IMR-90 (cell line): ENCODE measurements at regions of chr17 and their contacts with region 1.

Region 1: DNA sequence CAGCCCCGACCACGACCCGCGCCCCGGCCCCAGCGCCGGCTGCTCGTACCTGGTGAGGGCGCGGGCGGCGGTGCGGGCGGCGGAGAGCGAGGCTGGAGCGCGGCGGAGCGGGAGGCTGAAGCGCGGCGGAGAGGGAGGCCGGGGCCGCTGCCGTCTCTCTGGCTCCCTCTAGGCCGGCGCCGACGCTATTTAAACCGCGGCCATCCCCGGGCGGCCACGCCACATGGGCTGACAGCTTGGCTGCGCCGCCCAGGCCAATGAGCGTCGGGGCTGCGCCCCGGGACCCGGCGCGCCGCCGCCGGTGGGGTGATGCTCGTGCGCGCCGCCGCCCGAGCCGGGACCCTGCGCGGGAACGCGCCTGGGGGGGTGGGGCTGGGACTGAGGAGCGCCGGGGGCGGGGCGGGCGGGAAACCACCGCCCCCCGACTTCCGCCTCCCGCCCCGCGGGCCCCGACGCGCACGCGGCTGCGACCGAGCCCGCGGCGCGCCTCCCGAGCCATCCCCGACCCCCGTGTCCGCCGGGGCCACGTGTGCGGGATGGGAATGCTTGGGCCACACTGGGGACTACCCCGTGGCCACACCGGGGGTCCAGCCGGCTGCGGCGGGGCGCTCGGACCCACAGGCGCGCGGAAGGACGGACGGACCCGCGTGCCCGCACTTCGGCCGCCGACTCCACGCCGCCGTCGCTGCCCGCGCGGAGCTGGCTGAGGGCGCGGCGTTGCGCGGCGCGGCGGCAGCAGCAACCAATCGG is at the start of gene FASN:
- DNase-seq: peak; percentile 93
- ATAC-seq: peak; percentile 85
- H3K4me3 ChIP-seq: peak within 1 kb of the TSS; percentile 72
- H3K27ac ChIP-seq: peak within 1 kb of the TSS; percentile 94
- H3K4me1 ChIP-seq: peaks cover 13% of the 10 kb centered on the region
- H3K27me3 ChIP-seq: no peaks in the 10 kb centered on the region
- CTCF ChIP-seq: peak; percentile 66
- POLR2A ChIP-seq: peak; percentile 97
- RAD21 ChIP-seq: peak; percentile 15; the same call in 1 of the 2 replicates
- total RNA-seq, gene FASN: 12.4 and 15.3 TPM in 2 replicates

Region 2: DNA sequence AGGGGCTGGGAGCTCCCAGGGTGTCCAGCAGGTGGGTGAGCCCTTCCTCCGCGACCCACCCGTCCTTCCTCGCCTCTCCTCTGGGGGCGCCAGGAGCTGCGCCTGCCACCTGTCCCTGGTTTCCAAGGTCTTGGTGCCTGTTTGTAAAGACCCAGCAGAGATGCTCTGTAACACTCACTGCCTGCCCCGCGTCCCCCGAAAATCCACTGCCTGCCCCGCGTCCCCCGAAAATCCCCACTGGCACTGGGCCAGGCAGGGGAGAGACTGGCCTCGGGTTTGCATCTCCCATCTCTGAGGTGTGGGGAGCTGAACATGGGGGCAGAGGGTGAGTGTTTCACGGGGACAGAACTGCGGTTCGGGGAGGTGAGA is 657.4 kb before region 1 on chr17:
- CTCF ChIA-PET with region 1: no interaction called
- POLR2A ChIA-PET with region 1: no interaction called
- dilution Hi-C with region 1: no loop called
- in situ Hi-C with region 1: no loop called
- intact Hi-C with region 1: no loop called
- DNase-seq: no peak
- ATAC-seq: no peak
- H3K4me3 ChIP-seq: no peak overlapping the region
- H3K27ac ChIP-seq: no peak overlapping the region
- H3K4me1 ChIP-seq: peaks cover 4% of the 10 kb centered on the region
- H3K27me3 ChIP-seq: no peaks in the 10 kb centered on the region
- CTCF ChIP-seq: peak; percentile 44
- POLR2A ChIP-seq: no peak
- RAD21 ChIP-seq: peak; percentile 47

Region 3: DNA sequence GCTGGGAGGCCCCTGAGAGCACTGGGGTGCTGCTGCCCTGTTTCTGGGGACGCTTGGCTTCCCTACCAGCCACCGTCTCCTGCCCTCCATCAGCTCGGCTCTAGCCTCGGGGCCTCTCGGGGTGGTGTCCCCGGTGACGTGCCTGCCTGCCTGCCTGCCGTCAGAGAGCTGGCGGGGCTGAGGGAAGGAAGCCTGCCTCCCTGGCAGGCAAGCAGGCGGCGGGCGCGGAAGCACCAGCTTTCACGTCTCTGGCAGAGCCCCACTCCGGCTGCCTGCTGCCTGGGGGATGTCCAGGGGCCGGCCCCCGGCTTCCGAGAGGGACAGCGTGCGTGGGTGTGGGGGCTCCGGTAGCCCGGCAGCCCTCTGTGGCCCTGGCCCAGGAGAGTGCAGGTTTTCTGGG is 84.9 kb before region 1 on chr17:
- CTCF ChIA-PET with region 1: no interaction called
- POLR2A ChIA-PET with region 1: no interaction called
- dilution Hi-C with region 1: no loop called
- in situ Hi-C with region 1: no loop called
- intact Hi-C with region 1: no loop called
- DNase-seq: peak; percentile 10
- ATAC-seq: no peak
- H3K4me3 ChIP-seq: no peak overlapping the region
- H3K27ac ChIP-seq: no peak overlapping the region
- H3K4me1 ChIP-seq: no peaks in the 10 kb centered on the region
- H3K27me3 ChIP-seq: no peaks in the 10 kb centered on the region
- CTCF ChIP-seq: no peak
- POLR2A ChIP-seq: no peak
- RAD21 ChIP-seq: no peak

Region 4: DNA sequence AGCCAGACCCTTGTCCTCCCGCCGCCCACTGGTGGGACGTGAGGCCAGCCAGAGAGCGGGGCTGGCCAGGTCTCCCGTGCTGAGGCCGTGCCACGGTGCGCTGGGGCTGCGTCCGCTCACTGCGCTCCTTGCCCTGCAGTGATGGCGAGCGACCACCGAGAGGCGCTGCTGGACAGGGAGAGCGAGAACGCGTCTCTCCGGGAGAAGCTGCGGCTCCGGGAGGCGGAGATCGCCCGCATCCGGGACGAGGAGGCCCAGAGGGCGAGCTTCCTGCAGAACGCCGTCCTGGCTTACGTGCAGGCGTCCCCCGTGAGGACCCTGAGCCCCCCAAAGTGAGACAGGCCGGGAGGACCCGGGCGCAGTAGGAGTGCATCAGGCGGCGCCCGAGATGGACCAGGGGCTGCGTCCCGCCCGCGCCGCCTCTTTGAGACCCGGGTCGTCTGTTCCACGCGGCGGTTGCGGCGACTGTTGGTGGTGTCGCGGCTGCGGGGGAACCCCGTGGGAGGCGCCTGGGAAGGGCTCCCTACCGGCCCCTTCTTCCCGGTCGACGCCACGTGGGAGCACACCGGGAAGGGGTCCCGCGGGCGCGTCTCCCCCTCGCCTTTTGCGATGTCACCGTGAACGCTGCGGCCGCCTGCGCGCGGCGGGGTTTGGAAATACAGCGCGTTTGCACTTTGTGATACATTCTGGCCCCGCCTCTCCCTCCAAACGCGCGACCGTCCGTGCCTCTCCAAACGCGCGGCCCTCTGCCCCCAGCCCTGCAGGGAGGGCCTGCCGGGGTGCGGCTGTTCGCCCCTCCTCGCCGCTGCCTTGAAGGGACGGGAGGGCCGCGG is 67.6 kb before region 1 on chr17:
- CTCF ChIA-PET with region 1: interaction called, 3 read pairs
- POLR2A ChIA-PET with region 1: no interaction called
- dilution Hi-C with region 1: no loop called
- in situ Hi-C with region 1: no loop called
- intact Hi-C with region 1: loop called (anchors 1 kb)
- DNase-seq: peak; percentile 79
- ATAC-seq: peak; percentile 89
- H3K4me3 ChIP-seq: peak overlapping the region; percentile 47
- H3K27ac ChIP-seq: no peak overlapping the region
- H3K4me1 ChIP-seq: peaks cover 4% of the 10 kb centered on the region; the same call in 1 of the 2 replicates
- H3K27me3 ChIP-seq: no peaks in the 10 kb centered on the region
- CTCF ChIP-seq: peak; percentile 93
- POLR2A ChIP-seq: no peak
- RAD21 ChIP-seq: peak; percentile 94

Region 5: DNA sequence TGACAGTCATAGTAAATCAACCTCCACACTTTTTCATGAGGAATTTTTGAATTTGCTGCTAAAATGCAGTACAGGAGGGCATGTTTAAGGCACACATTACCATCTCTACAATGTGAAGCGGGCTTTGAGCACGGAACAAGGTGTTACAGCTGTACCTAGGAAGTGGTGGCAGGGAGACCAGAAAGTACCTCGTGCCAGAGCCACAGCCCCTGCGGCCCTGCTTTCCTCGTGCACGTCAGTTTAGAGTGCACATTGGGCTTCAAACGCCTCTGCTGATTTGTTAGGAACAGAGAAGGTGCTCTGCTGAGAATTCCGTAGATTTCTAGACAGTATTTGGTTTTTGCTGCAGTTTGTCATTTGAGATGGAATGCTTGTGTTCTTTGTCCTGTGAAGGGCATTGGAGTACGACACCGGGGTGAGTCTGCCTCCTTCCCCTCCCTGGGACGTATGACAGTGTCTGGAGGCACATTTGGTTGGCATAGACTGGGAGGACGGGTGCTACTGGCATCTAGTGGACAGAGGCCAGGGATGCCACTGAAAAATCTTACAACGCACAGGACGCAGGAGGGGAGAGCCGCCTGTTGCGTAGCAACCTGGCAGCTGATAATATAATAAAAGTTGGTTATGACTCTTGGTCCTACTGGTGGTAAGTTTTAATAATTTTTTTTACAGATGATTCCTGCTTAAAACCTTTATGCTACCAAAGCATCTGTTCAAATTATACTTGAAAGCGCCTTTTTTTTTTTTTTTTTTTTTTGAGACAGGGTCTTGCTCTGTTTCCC is 430.4 kb after region 1 on chr17:
- CTCF ChIA-PET with region 1: no interaction called
- POLR2A ChIA-PET with region 1: no interaction called
- dilution Hi-C with region 1: no loop called
- in situ Hi-C with region 1: no loop called
- intact Hi-C with region 1: no loop called
- DNase-seq: peak; percentile 24
- ATAC-seq: no peak
- H3K4me3 ChIP-seq: no peak overlapping the region
- H3K27ac ChIP-seq: no peak overlapping the region
- H3K4me1 ChIP-seq: peaks cover 13% of the 10 kb centered on the region
- H3K27me3 ChIP-seq: no peaks in the 10 kb centered on the region
- CTCF ChIP-seq: peak; percentile 28; the same call in 1 of the 2 replicates
- POLR2A ChIP-seq: no peak
- RAD21 ChIP-seq: peak; percentile 31; the same call in 1 of the 2 replicates